ENCODE measurements at regions of chr4 and their contacts with region 1.

Region 1: DNA sequence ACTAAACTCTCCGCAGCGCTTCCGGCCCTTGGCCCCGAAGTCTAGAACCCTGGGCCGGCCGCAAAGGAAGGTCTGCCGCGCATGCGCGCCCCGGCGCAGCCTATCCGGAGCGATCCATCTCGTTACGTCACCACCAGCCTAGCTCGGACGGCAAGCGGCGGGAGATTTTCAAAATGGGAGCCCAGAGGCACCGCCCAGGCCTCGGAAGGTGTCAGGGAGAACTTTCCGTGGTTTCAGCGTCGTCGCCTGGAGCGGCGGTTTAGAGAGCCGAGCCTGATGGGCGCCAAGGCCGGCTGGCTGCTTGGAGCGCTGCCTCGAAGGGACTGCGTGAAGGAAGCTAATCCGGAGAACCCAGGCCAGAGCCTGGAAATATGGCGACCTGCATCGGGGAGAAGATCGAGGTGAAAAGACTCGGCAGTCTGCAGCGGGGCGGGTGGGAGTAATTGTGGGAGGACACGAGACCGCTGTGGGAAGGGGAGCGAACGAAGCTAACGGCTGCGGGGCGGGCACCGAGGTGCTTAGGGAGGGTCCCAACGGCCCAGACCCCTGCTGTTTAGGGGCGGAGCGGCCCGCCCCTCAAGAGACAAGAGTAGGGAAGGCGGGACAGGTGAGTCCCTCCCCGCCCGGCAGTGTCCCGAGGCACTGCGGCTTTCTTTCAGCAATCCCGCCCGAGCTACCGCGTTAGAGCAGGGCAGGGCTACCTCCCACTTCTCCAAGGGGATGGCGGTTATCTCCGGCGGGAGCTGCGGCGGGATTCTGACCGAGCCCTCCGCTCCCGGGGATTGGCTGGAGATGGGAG is at the start of gene PLK4:
- DNase-seq: peak; percentile 93
- H3K4me3 ChIP-seq: peak within 1 kb of the TSS; percentile 91 to 96 (median 94)
- H3K27ac ChIP-seq: peak within 1 kb of the TSS; percentile 95
- H3K4me1 ChIP-seq: no peaks in the 10 kb centered on the region
- H3K27me3 ChIP-seq: no peaks in the 10 kb centered on the region
- CTCF ChIP-seq: no peak
- total RNA-seq, gene PLK4: 2.8 to 15.2 TPM

Region 2: DNA sequence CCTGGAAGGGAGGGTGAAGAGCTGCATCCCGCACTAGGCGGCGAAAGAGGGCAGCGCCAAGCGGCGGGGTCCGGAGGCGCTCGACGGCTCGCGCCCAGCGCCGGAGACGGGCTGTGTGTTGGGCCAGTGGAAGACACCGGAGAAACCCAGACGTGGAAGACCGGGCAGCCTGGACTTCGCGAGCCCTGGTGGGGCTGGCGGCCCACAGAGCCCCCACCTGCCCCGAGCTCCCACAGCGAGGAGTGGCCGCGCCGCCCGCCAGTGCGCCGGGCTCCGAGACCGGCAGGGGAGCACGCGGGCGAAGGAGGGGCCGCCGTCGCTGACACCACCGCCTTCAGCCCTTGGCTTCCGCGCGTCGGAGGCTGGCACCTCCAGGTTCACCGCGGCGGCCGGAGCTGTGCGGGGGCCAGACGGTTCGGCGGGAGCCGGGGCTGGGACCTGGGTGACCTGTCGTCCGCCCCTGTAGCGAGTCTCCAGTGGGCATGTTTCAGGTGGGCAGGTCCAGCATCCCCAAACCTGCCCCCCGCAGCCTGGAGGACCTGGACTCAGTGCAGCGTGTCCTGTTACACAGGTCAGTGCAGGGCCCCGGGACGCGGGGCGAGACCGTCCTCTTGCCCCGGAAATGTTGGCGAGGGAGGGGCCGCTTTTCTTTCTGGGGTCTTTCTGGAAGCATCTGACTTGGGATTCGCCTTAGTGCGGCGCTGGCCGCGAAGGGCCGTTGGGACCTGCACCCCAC is 257.9 kb before region 1 on chr4:
- CTCF ChIA-PET with region 1: no interaction called
- dilution Hi-C with region 1: no loop called
- in situ Hi-C with region 1: no loop called
- intact Hi-C with region 1: loop called (anchors 2 kb)
- DNase-seq: peak; percentile 64
- H3K4me3 ChIP-seq: peak overlapping the region; percentile 82 to 91 (median 85)
- H3K27ac ChIP-seq: peak overlapping the region; percentile 47
- H3K4me1 ChIP-seq: no peaks in the 10 kb centered on the region
- H3K27me3 ChIP-seq: no peaks in the 10 kb centered on the region
- CTCF ChIP-seq: peak; percentile 5 to 46

Region 3: DNA sequence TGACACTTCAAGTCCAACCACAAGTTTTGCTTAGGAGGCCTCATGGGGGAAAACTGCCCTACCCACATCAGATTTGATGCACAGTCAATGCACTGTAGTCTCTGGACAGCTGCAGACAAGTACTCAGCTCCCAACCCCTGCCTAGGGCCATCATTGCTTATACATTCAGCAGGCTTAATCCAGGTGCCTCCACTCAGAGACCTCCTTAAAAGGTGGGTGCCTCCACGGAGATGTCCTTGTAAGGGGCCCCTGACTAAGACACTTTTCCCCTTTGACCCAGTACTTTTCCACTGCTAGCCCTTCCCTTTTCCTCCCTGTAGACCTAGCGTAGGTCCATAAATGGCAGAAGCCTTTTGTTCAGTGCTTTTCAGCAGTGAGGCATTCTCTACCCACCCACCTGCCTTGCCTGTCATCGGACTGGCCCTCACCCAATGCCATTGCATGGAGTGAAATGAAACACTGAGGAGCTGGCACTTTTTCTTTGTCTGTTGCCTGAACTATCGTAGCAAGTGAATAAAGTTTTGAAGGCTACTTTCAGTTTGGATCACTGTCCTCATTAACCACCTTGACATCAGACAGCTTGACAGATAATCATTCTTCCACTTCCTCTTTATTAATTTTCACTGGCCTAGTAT is 24.0 kb before region 1 on chr4:
- CTCF ChIA-PET with region 1: no interaction called
- dilution Hi-C with region 1: no loop called
- in situ Hi-C with region 1: no loop called
- intact Hi-C with region 1: loop called (anchors 1 kb)
- DNase-seq: peak; percentile 94
- H3K4me3 ChIP-seq: peak overlapping the region in 1 of 3 experiments; percentile 11
- H3K27ac ChIP-seq: peak overlapping the region; percentile 67
- H3K4me1 ChIP-seq: peaks cover 19% of the 10 kb centered on the region
- H3K27me3 ChIP-seq: no peaks in the 10 kb centered on the region
- CTCF ChIP-seq: no peak

Region 4: DNA sequence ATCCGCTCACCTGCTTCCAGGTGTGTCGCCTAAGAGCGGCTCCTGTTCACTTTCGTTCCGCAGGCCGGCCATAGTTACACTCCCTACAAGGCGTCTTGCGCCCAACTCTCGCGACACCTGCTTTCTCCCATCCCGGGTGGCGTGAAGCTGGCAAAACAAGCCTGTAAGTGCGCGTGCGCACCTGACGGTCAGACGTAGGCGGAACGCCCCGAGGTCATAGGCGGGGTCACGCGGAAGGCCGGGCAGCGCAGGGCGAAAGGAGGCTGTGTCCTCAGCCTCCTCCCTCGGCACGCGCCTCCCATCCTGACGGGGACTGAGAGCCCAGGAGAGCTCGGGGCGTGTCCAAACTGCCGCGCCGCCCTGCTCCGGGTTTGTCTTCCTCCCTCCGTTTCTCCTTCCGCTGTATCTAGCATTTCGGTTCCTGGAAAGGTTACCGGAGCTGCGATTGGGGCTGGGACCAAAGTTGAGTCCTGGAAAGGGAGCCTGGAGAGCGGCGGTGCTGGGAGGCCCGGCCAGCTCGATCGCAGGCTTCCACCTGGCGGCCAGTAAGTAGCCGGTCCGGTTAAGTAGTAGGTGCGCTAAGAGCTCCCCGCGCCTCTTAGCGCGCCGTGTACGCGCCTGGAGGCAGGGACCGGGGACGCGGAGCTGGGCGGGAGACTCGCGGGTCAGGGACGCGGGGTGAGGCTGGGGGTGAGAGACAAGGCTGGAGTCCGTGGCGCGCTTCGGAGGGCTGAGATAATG is 84.3 kb after region 1 on chr4 and contains the starts of genes ABHD18 and MFSD8:
- CTCF ChIA-PET with region 1: no interaction called
- dilution Hi-C with region 1: no loop called
- in situ Hi-C with region 1: loop called in 1 of 2 experiments (anchors 10 kb)
- intact Hi-C with region 1: loop called (anchors 1 kb)
- DNase-seq: peak; percentile 99
- H3K4me3 ChIP-seq: peak within 1 kb of the TSS; percentile 60 to 97 (median 88)
- H3K27ac ChIP-seq: peak within 1 kb of the TSS; percentile 87
- H3K4me1 ChIP-seq: peaks cover 10% of the 10 kb centered on the region
- H3K27me3 ChIP-seq: no peaks in the 10 kb centered on the region
- CTCF ChIP-seq: peak in 1 of 2 donors; percentile 58
- total RNA-seq, gene ABHD18: 6.3 to 7.7 TPM
- total RNA-seq, gene MFSD8: 23.3 to 28.0 TPM

Region 5: GRCh38 chr4:128060699-128061565 is 180.0 kb after region 1 on chr4 and contains the start of gene LARP1B:
- CTCF ChIA-PET with region 1: no interaction called
- dilution Hi-C with region 1: no loop called
- in situ Hi-C with region 1: no loop called
- intact Hi-C with region 1: loop called (anchors 5 kb)
- DNase-seq: peak; percentile 98
- H3K4me3 ChIP-seq: peak within 1 kb of the TSS; percentile 81 to 97 (median 97)
- H3K27ac ChIP-seq: peak within 1 kb of the TSS; percentile 90
- H3K4me1 ChIP-seq: no peaks in the 10 kb centered on the region
- H3K27me3 ChIP-seq: no peaks in the 10 kb centered on the region
- CTCF ChIP-seq: no peak
- total RNA-seq, gene LARP1B: 15.3 to 27.0 TPM

Measured in mammary epithelial cell (primary cell).